AG04449 (cell line): ENCODE measurements at regions of chr2 and their contacts with region 1.

Region 1: DNA sequence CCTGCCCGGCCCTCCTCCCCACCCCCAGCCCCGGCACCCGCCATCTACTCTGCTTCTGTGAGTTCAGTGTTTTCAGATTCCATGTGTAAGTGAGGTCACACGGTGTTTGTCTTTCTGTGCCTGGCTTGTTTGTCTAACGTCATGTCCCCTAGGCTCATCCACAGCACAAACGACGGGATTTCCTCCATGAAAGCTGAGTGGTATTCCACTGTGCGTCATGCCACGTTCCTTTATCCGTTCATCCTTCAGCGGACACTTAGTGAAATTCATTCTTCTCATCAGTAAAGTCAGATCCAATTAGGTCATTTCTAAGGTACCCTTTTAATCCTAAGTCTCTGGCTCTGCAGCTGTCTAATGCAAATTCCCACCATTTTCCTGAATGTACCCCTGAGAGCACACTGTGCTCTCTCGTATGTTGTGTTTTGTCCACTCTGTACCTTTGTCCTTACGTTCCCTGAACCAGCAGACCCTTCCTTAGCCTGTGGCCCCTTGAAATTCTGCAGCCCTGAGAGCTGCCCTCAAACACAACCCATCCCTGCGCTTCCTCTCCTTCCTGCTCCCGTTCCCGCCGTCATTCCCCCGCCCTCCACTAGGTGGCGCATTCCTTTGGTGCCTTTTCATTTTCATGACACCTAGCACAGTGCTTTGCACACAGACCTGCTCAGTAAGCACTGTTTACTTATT is 44.1 kb downstream of the TRAPPC12 start:
- DNase-seq: no peak
- H3K4me3 ChIP-seq: no peak overlapping the region
- CTCF ChIP-seq: peak; percentile 95

Region 2: DNA sequence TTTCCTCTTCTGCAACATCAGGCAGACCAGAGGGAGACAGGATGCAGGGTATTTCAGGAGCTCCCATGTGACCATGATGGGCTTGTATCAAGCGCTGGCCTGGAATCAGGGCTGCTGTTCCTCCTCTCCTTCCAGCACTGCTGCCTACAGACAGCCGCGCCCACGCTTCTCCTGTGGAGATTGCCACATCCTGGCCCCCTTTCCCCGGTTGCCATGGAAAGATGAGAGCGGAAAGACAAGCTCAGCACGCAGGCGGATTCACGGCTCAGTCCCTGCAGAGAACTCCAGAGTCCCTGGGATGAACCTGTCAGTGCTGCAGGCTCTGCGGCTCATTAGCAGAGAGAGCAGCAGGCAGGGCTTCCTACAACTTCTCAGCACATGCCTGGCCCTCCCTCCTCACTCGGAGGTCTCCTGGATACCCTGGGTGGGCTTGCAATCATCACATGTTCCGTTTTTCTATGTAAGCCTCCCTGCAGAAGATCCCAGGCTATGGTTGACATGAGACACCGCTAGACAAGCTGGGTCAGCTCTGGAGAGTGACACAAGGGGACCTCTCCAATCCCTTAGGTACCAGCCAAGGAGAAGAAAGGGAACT is 594.8 kb before region 1 on chr2:
- CTCF ChIA-PET with region 1: no interaction called
- POLR2A ChIA-PET with region 1: no interaction called
- DNase-seq: no peak
- H3K4me3 ChIP-seq: no peak overlapping the region
- CTCF ChIP-seq: no peak

Region 3: DNA sequence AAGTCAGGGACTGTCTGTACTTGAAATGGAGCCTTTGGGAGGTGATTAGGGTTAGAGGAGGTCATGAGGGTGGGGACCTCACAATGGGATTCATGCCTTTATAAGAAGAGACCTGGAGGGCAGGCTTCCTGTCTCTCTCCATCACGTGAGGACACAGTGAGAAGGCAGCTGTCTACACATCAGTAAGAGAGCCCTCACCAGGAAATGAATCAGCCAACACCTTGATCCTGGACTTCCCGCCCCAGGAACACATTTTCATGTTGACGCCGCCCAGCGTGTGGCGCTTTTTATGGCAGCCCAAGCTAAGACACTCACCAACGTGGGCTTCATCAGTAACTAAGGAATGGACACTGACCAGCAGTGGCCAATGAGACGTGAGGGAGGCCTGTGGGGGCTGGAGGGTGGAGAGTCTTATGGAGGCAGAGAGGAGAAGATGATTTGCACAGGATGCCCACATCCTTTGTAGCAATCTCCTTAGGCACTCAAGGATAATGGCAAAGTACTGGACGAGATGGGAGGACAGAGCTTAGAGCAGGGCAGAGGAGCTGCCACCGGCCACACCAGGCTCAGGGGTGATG is 208.7 kb before region 1 on chr2:
- CTCF ChIA-PET with region 1: no interaction called
- POLR2A ChIA-PET with region 1: no interaction called
- DNase-seq: no peak
- H3K4me3 ChIP-seq: no peak overlapping the region
- CTCF ChIP-seq: no peak

Region 4: GRCh38 chr2:3386448-3386958 is 37.1 kb before region 1 on chr2:
- CTCF ChIA-PET with region 1: interaction called, 26 read pairs
- POLR2A ChIA-PET with region 1: no interaction called
- DNase-seq: no peak
- H3K4me3 ChIP-seq: no peak overlapping the region
- CTCF ChIP-seq: no peak

Region 5: GRCh38 chr2:3403587-3404334 is 19.9 kb before region 1 on chr2:
- CTCF ChIA-PET with region 1: interaction called, 94 read pairs
- POLR2A ChIA-PET with region 1: no interaction called
- DNase-seq: no peak
- H3K4me3 ChIP-seq: no peak overlapping the region
- CTCF ChIP-seq: no peak

Region 6: DNA sequence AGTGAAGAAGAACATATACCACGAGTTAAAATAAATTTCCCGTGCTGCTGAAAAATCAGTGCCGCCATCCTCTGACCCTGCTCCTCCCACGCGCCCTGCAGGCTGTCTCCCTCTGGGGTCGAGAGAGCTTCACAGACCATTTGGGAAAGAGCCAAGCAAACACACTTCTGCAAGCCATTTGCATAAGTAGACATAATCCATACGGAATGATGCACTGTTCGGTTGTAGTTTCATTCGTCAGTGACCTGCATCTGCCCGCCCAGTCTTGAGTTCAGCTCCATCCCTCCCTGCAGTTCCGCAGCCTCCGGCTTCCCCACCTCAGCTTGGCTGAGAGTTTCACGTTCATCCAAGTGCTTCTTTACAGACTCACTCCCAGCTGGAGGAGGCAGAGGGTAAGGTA is 25.5 kb after region 1 on chr2:
- CTCF ChIA-PET with region 1: interaction called, 89 read pairs
- POLR2A ChIA-PET with region 1: no interaction called
- DNase-seq: no peak
- H3K4me3 ChIP-seq: no peak overlapping the region
- CTCF ChIP-seq: no peak

Region 7: DNA sequence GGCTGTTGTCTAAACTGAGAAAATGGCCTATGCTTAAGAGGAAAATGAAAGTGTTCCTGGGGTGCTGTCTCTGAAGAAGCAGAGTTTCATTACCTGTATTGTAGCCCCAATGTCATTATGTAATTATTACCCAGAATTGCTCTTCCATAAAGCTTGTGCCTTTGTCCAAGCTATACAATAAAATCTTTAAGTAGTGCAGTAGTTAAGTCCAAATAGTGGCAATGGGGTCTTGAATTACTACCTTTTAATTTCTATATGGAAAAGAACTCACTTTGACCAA is 220.6 kb after region 1 on chr2:
- CTCF ChIA-PET with region 1: interaction called, 96 read pairs
- POLR2A ChIA-PET with region 1: no interaction called
- DNase-seq: no peak
- H3K4me3 ChIP-seq: no peak overlapping the region
- CTCF ChIP-seq: no peak

Region 8: DNA sequence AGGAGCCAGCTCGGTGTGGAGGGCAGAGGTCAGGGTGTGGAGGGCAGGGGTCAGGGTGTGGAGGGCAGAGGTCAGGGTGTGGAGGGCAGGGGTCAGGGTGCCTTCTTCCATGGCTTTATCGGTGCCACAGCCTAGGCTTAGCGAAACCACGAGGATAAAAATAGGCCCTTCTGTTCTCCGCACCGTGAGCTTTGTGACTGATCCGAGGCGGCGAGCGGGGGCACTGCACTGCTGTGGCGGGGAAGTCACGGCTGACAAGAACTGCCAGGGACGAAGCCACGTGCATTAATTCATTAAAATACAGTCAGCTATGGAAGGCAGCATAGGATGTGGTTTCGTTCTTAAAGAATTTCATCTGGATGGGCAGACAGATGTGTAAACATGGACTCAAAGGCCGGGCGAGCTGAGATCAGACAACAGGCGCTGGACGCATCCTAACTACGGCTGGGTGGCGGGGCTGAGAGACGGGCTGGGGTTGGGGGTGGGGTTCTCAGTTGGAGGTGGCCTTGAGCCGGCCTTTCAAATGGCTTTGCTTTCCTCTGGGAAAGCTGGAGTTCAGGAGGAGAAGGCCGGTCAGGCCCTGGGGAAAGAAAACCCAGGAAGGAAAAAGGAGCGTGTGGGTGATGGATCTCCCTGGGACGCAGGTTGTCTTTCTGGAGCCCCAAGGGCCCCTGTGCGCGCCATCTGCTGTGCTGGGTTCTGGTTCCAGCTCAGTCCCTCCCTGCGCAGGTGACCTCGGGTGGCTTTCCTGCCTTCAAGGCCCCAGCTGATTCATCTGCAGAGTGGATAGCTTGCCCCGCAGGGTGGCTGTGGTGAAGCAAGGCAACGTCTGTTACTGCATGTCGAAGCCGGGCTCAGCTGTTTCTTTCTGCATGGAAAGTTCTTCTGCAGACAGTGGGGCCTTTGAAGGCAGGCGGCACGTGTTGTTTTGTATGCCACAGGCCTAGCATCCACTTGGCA is 233.4 kb after region 1 on chr2:
- CTCF ChIA-PET with region 1: interaction called, 96 read pairs
- POLR2A ChIA-PET with region 1: no interaction called
- DNase-seq: no peak
- H3K4me3 ChIP-seq: no peak overlapping the region
- CTCF ChIP-seq: no peak

Region 9: GRCh38 chr2:3692381-3692780 is 268.7 kb after region 1 on chr2:
- CTCF ChIA-PET with region 1: no interaction called
- POLR2A ChIA-PET with region 1: no interaction called
- DNase-seq: no peak
- H3K4me3 ChIP-seq: no peak overlapping the region
- CTCF ChIP-seq: no peak